ENCODE measurements at regions of chr12 and their contacts with region 1.

Region 1: DNA sequence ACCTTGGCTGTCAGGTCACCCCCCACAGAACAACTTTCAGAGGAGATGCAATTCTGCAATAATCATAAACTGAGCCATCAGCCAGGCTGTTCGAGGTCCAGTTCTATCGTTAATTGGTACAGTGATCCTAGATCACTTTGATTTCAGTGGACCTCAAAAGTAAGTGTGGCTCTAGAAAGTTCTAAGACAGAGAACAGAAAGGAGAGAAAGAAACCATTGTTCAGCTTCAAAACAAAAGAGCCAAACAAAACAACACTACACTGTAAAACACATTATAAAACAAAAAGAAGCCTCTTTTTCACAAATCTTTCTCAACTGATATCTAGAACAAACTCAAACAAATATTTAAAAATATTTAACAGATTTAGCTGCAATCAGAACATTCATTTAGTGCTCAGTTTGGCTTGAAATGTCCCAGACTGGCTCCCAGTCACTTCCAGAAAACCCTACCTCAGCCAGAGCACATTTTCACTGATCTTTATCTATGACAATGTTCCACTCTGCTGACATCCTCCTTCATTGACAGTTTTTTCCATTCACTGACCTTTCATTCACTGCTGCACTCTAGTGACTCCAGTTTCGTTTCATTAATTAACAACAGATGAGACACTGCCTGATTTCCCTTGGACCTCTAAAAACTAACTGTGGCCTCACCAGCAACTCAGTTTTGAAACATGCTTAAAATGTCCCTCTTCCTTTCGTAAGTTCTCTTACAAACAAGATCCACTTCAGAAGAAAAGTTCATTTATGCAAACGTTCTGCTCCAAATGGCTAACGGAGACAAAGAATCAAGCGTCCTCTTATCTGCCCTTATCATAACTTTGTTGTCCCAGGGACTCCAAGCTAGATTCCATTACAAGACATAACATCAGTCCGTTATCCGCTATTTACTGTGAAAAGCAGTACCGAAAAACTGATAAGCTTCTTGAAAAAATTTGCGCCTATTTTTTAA is 56.8 kb downstream of the DUSP16 start:
- DNase-seq: peak; percentile 63
- H3K4me3 Mint-ChIP-seq: peak overlapping the region; percentile 63
- H3K27ac Mint-ChIP-seq: peak overlapping the region; percentile 95
- H3K4me1 Mint-ChIP-seq: peaks cover 57% of the 10 kb centered on the region
- H3K27me3 Mint-ChIP-seq: no peaks in the 10 kb centered on the region

Region 2: GRCh38 chr12:12456637-12457036 is 49.2 kb before region 1 on chr12:
- CTCF ChIA-PET with region 1: interaction called, 12 read pairs
- POLR2A ChIA-PET with region 1: interaction called, 13 read pairs
- intact Hi-C with region 1: loop called (anchors 1 kb)
- DNase-seq: no peak
- H3K4me3 Mint-ChIP-seq: peak overlapping the region; percentile 47
- H3K27ac Mint-ChIP-seq: peak overlapping the region; percentile 93
- H3K4me1 Mint-ChIP-seq: peaks cover 63% of the 10 kb centered on the region
- H3K27me3 Mint-ChIP-seq: no peaks in the 10 kb centered on the region

Region 3: GRCh38 chr12:12474931-12475795 is 30.7 kb before region 1 on chr12:
- CTCF ChIA-PET with region 1: interaction called, 15 read pairs
- POLR2A ChIA-PET with region 1: interaction called, 76 read pairs
- intact Hi-C with region 1: loop called (anchors 1 kb)
- DNase-seq: peak; percentile 86
- H3K4me3 Mint-ChIP-seq: peak overlapping the region; percentile 63
- H3K27ac Mint-ChIP-seq: peak overlapping the region; percentile 99
- H3K4me1 Mint-ChIP-seq: peaks cover 82% of the 10 kb centered on the region
- H3K27me3 Mint-ChIP-seq: no peaks in the 10 kb centered on the region

Region 4: GRCh38 chr12:12582895-12583303 is 77.1 kb after region 1 on chr12:
- CTCF ChIA-PET with region 1: interaction called, 3 read pairs
- POLR2A ChIA-PET with region 1: interaction called, 3 read pairs
- intact Hi-C with region 1: loop called (anchors 1 kb)
- DNase-seq: peak; percentile 81
- H3K4me3 Mint-ChIP-seq: peak overlapping the region; percentile 40
- H3K27ac Mint-ChIP-seq: peak overlapping the region; percentile 84
- H3K4me1 Mint-ChIP-seq: peaks cover 50% of the 10 kb centered on the region
- H3K27me3 Mint-ChIP-seq: peaks cover 3% of the 10 kb centered on the region

Region 5: DNA sequence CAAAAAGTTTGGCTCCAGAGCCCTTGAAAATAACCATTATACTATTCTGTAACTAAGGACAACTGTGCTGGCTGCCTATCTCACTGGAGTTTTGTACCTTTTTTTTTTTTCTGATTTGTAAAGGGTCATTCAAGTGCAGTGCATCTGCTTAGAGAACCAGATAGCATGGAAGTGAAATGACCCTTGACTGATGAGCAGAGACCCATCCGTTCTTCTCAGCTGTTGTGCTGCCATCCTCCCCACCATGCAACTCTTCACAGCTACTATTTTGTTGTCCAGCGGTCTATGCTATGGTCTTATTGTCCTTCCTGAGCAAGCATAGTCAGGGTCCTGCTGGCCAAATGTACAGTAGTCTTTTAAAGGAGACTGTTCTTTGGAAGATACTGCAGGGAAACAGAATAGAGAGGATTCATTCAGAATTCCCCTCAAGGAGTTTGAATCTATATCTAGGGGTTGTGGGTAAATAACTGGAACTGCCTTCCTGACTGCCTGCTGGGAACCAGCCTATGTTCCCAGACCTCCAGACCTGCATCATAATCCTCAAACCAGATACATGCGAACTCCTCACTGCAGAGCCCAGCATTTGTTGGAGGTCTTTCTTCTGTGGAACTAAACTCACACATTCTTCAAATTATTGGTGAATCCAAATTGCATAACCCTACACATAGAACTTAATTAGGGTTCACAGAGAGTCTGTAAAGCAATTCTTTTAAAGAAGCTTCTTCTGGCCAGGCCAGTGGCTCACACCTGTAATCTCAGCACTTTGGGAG is 149.1 kb after region 1 on chr12:
- CTCF ChIA-PET with region 1: interaction called, 4 read pairs
- POLR2A ChIA-PET with region 1: no interaction called
- intact Hi-C with region 1: loop called (anchors 5 kb)
- DNase-seq: no peak
- H3K4me3 Mint-ChIP-seq: no peak overlapping the region
- H3K27ac Mint-ChIP-seq: no peak overlapping the region
- H3K4me1 Mint-ChIP-seq: peaks cover 9% of the 10 kb centered on the region
- H3K27me3 Mint-ChIP-seq: no peaks in the 10 kb centered on the region

Region 6: DNA sequence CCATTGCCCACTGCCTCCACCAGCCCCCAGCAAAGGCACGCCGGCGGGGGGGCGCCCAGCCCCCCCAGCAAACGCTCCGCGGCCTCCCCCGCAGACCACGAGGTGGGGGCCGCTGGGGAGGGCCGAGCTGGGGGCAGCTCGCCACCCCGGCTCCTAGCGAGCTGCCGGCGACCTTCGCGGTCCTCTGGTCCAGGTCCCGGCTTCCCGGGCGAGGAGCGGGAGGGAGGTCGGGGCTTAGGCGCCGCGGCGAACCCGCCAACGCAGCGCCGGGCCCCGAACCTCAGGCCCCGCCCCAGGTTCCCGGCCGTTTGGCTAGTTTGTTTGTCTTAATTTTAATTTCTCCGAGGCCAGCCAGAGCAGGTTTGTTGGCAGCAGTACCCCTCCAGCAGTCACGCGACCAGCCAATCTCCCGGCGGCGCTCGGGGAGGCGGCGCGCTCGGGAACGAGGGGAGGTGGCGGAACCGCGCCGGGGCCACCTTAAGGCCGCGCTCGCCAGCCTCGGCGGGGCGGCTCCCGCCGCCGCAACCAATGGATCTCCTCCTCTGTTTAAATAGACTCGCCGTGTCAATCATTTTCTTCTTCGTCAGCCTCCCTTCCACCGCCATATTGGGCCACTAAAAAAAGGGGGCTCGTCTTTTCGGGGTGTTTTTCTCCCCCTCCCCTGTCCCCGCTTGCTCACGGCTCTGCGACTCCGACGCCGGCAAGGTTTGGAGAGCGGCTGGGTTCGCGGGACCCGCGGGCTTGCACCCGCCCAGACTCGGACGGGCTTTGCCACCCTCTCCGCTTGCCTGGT is 211.2 kb after region 1 on chr12 and contains the start of gene CDKN1B:
- CTCF ChIA-PET with region 1: no interaction called
- POLR2A ChIA-PET with region 1: interaction called, 4 read pairs
- intact Hi-C with region 1: loop called (anchors 5 kb)
- DNase-seq: peak; percentile 92
- H3K4me3 Mint-ChIP-seq: peak within 1 kb of the TSS; percentile 98
- H3K27ac Mint-ChIP-seq: peak within 1 kb of the TSS; percentile 98
- H3K4me1 Mint-ChIP-seq: peaks cover 45% of the 10 kb centered on the region
- H3K27me3 Mint-ChIP-seq: no peaks in the 10 kb centered on the region
- total RNA-seq, gene CDKN1B: 52.4 to 52.8 TPM